Activated CD4-positive, alpha-beta memory T cell treated with anti-CD3 and anti-CD28 coated beads, Interleukin-2, amount 10 ng/mL, durations not matched to agents 7 days and 5 days (primary cell): ENCODE measurements at regions of chr5 and their contacts with region 1.

Region 1: GRCh38 chr5:133423618-133424282 is 188.6 kb downstream of the FSTL4 start:
- DNase-seq: peak; percentile 67
- H3K4me3 Mint-ChIP-seq: no peak overlapping the region
- H3K27ac Mint-ChIP-seq: no peak overlapping the region
- H3K4me1 Mint-ChIP-seq: peaks cover 8% of the 10 kb centered on the region
- H3K27me3 Mint-ChIP-seq: peaks cover 12% of the 10 kb centered on the region

Region 2: DNA sequence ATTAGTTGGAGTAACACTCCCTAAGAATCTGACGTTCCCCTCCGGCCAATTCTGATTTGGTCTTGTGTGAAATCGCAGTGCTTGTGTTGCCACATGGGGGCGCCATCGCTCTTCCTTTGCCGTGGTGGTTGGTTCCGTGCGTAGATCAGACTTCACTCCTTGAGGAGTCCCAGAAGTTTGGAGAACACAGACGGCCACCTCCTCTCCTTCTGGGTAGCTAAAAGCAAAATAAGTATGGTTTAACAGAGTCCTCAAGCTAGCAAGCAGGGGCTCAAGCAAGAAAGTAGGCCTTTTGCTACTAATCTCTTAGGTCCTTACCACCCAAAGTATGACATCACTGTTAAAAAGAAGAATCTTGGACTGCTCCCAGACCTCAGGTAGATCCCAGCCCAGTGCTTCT is 312.5 kb before region 1 on chr5:
- CTCF ChIA-PET with region 1: interaction called, 17 read pairs
- POLR2A ChIA-PET with region 1: no interaction called
- DNase-seq: peak; percentile 79
- H3K4me3 Mint-ChIP-seq: no peak overlapping the region
- H3K27ac Mint-ChIP-seq: no peak overlapping the region
- H3K4me1 Mint-ChIP-seq: peaks cover 14% of the 10 kb centered on the region
- H3K27me3 Mint-ChIP-seq: peaks cover 7% of the 10 kb centered on the region

Region 3: GRCh38 chr5:133287500-133287899 is 136.2 kb before region 1 on chr5:
- CTCF ChIA-PET with region 1: no interaction called
- POLR2A ChIA-PET with region 1: no interaction called
- DNase-seq: no peak
- H3K4me3 Mint-ChIP-seq: no peak overlapping the region
- H3K27ac Mint-ChIP-seq: no peak overlapping the region
- H3K4me1 Mint-ChIP-seq: no peaks in the 10 kb centered on the region
- H3K27me3 Mint-ChIP-seq: no peaks in the 10 kb centered on the region

Region 4: DNA sequence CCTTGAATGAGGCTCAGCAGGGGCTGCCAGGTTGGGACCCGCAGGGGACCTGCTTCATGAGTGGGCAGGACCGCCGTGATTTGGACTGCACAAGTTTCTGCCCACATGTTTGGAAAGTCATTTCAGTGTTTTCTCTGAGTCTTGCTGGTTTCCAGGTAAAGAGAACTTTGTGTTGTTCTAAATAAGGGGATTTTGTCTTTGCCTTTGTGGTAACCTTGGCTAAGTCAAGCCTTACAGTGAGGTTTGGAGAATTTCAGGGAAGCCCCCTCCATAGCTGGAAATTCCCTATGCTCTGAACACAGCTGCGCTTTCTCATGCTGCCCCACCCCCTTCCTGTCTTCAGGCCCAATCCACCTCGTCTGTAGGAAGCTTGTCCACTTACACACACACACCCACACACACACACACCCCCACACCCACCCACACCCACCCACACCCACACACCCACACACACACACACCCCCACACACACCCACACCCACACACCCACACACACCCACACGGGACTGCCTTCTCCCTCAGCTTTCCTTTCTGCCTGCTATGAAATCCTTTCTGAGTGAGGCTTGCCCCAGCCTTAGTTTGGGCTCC is 101.8 kb before region 1 on chr5:
- CTCF ChIA-PET with region 1: no interaction called
- POLR2A ChIA-PET with region 1: no interaction called
- DNase-seq: no peak
- H3K4me3 Mint-ChIP-seq: no peak overlapping the region
- H3K27ac Mint-ChIP-seq: no peak overlapping the region
- H3K4me1 Mint-ChIP-seq: peaks cover 9% of the 10 kb centered on the region
- H3K27me3 Mint-ChIP-seq: no peaks in the 10 kb centered on the region

Region 5: DNA sequence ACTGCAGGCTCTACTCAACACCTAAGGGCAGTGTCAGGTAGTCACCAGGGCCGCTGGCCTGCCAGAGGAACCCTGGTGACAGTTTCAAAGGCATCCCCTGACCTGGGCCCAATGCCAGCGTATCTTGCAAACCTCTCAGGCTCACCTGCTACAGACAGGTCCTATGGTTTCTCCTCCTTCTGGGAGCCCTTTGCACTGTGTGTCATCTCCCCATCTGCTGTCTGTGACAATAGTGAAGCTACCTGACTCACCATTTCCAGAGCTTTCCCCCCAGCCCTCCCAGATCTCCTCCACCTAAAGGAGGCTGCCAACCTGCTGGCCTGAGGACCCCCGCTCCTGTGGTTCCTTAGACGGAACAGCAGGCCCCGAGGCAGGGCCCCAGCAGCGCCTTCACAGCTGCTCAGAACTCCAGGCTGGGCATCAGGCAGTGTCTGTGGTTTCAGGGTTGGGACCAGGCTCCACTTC is 14.5 kb before region 1 on chr5:
- CTCF ChIA-PET with region 1: interaction called, 15 read pairs
- POLR2A ChIA-PET with region 1: no interaction called
- DNase-seq: no peak
- H3K4me3 Mint-ChIP-seq: no peak overlapping the region
- H3K27ac Mint-ChIP-seq: no peak overlapping the region
- H3K4me1 Mint-ChIP-seq: no peaks in the 10 kb centered on the region
- H3K27me3 Mint-ChIP-seq: peaks cover 21% of the 10 kb centered on the region

Region 6: DNA sequence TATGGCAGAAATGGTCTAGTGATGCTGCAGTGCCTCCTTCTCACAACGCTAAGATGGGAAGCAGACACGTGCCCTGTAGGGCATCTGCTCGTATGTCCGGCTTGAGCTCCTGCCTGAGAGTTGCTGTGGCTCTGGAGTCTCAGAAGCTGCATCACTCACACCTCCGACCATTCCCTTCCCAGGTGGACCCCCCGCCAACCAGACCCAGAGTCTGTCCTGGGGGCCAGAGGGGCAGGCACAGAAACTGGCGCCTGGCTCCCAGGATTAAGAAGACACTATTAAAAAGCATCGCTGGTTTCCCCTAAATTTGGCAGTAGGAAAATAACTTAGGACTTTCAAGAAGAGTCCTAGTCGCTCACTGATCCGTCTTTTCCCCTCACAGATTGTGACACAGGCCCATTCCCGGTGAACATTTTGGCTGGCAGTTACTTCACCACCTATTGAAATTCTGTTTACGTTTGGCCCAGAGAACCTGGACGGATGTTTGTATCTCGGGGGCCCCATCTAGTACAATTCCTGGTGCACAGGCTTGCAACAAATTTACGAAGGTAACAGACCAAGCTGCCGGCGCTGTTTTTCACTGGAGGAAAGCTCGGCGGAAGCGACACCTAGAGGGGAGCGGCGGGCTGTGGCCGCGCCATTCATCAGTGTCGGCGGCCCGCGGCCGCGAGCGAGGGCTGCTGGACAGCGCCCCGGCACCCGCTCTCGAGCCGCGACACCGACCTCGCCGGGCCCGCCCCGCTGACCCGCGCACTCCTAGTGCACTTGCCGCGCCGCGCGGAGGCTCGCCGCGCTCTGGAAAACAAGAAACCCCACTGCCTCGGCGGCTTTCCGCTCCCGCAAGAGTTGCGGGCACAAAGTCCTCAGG is 187.0 kb after region 1 on chr5:
- CTCF ChIA-PET with region 1: interaction called, 11 read pairs
- POLR2A ChIA-PET with region 1: no interaction called
- DNase-seq: peak; percentile 36
- H3K4me3 Mint-ChIP-seq: no peak overlapping the region
- H3K27ac Mint-ChIP-seq: no peak overlapping the region
- H3K4me1 Mint-ChIP-seq: peaks cover 8% of the 10 kb centered on the region
- H3K27me3 Mint-ChIP-seq: peaks cover 55% of the 10 kb centered on the region

Region 7: GRCh38 chr5:133868946-133869518 is 445.3 kb after region 1 on chr5:
- CTCF ChIA-PET with region 1: interaction called, 21 read pairs
- POLR2A ChIA-PET with region 1: interaction called, 3 read pairs
- DNase-seq: peak; percentile 80
- H3K4me3 Mint-ChIP-seq: no peak overlapping the region
- H3K27ac Mint-ChIP-seq: no peak overlapping the region
- H3K4me1 Mint-ChIP-seq: peaks cover 9% of the 10 kb centered on the region
- H3K27me3 Mint-ChIP-seq: peaks cover 6% of the 10 kb centered on the region